ENCODE measurements at regions of chr6 and their contacts with region 1.

Region 1: DNA sequence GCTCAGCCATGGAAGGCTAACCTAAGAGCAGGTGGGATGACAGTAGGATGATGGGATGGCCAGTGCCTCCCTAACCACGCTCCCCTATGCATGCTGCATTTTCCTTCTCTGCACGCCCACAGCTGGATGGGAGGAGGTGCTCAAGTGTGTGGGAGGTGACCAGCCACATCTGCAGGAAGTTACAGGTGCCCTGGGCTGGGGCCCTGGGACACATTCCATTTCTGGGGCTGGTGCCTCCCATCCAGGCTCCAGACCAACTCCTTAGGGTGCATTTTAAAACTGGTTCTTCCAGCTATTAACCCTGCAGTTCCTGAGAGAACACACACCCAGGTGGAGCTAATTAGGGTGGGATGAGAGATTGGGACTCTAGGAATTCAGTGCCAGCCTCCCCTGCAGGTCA is 135.3 kb upstream of the ARMC2 start:
- DNase-seq: no peak

Region 2: GRCh38 chr6:108744996-108745395 is 32.0 kb after region 1 on chr6:
- intact Hi-C with region 1: loop called in 1 of 2 experiments (anchors 1 kb)
- DNase-seq: no peak

Region 3: DNA sequence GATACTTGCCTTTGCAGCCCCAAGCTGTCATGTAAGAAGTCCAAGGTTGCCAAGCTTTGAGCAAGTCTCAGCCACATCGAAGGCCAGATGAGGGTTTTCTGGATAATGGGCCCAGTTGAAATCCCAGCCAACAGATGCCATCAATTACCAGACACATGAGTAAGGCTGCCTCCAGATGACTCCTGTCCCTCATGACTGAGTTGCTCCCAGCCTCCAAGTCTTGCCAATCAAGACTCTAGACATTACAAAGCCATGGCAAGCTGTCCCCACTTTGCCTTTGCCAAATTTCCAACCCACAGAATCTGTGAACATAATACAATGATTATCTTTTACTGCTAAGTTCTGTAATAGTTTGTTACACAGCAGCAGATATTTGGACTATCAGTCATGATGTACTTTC is 58.5 kb after region 1 on chr6:
- intact Hi-C with region 1: no loop called
- DNase-seq: no peak

Measured in posterior vena cava (tissue), 2 donors.